Mammary epithelial cell (primary cell): ENCODE measurements at regions of chr6 and their contacts with region 1.

Region 1: DNA sequence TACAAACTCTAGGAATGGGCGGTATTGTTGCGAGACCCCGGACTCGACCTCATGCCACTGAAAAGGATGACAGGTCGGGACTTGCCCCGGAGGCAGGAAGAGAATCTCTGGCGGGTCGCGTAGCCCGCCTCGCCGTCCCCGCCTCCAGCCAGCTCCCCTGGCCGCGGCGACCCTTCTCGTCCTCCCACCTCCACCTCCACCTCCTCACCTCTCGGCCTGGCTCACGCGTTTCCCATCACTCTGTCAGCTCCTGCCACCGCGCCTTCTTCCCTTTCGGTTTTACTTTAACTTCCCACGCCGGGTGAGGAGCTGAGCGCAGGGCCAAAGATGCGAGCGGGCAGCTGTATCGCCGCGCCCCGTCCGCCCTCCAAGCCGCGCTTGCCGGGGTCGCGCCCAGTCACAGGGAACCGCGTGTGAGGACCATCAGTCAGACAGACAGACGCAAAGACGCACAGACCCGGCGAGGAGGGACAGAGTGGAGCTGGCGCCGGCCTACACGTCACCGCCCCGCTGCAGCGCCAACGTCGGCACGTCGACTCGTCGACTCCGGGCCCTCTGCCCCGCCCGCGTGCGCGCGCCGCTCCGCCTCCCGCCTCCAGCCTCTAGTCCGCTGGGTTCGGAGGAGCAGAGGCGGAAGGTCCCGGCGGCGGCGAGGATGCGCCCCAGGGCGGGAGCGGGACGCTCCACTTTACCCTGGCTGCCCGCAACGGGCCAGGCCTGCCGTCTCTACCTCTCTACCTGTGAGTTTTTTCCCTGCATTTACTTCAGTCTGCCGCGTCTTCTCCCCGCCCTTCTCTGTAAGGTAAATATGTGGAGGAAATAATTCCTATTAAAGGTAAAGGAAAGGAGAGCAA is at the start of gene ASCC3:
- DNase-seq: peak; percentile 93
- H3K4me3 ChIP-seq: peak within 1 kb of the TSS; percentile 78 to 97 (median 95)
- H3K27ac ChIP-seq: peak within 1 kb of the TSS; percentile 89
- H3K4me1 ChIP-seq: peaks cover 17% of the 10 kb centered on the region
- H3K27me3 ChIP-seq: no peaks in the 10 kb centered on the region
- CTCF ChIP-seq: no peak
- total RNA-seq, gene ASCC3: 89.2 to 100 TPM

Region 2: GRCh38 chr6:101083533-101084172 is 202.6 kb after region 1 on chr6:
- CTCF ChIA-PET with region 1: no interaction called
- dilution Hi-C with region 1: no loop called
- in situ Hi-C with region 1: no loop called
- intact Hi-C with region 1: loop called (anchors 5 kb)
- DNase-seq: peak; percentile 87
- H3K4me3 ChIP-seq: no peak overlapping the region
- H3K27ac ChIP-seq: peak overlapping the region; percentile 58
- H3K4me1 ChIP-seq: peaks cover 10% of the 10 kb centered on the region
- H3K27me3 ChIP-seq: no peaks in the 10 kb centered on the region
- CTCF ChIP-seq: no peak

Region 3: GRCh38 chr6:101352316-101352715 is 471.2 kb after region 1 on chr6:
- CTCF ChIA-PET with region 1: no interaction called
- dilution Hi-C with region 1: no loop called
- in situ Hi-C with region 1: no loop called
- intact Hi-C with region 1: no loop called
- DNase-seq: no peak
- H3K4me3 ChIP-seq: no peak overlapping the region
- H3K27ac ChIP-seq: no peak overlapping the region
- H3K4me1 ChIP-seq: no peaks in the 10 kb centered on the region
- H3K27me3 ChIP-seq: peaks cover 3% of the 10 kb centered on the region
- CTCF ChIP-seq: no peak